GM10248 (cell line): ENCODE measurements at regions of chr4 and their contacts with region 1.

Region 1: GRCh38 chr4:70958681-70959080 is 34.8 kb upstream of the DCK start:
- DNase-seq: no peak
- CTCF ChIP-seq: no peak

Region 2: GRCh38 chr4:70936200-70936787 is 22.4 kb before region 1 on chr4:
- CTCF ChIA-PET with region 1: no interaction called
- POLR2A ChIA-PET with region 1: no interaction called
- DNase-seq: no peak
- CTCF ChIP-seq: no peak

Region 3: GRCh38 chr4:70969076-70969475 is 10.4 kb after region 1 on chr4:
- CTCF ChIA-PET with region 1: interaction called, 12 read pairs
- POLR2A ChIA-PET with region 1: no interaction called
- DNase-seq: no peak
- CTCF ChIP-seq: no peak